ENCODE measurements at regions of chr21 and their contacts with region 1.

Region 1: DNA sequence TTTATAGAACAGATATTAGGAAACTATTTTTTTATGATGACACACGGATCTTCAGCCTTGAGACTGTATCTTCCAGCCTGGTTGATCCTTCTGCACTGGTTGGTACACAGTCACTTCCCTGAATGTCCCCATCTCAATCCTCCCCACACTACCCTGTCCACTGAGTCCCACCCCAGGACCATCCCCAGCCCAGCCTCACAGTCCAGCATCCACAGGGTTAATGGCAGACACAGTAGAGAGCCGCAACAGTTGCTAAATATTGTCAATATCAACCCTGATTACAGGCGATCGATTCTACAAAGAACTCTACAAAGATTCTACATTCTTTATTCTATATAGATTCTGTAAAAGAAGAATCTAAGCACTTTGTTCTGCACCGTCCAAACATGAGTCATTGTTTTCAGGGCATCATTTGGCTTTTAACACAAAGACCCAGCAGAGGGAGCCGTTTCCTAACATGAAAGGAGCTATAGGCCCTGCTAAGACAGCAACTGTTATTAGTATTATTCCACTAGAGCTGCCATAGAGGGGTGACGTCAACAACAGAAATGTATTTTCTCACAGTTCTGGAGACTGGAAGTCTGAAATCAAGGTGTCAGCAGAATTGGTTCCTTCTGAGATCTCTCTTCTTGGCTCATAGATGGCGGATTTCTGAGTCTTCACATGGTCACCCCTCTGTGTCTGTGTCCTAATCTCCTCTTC is 30.1 kb upstream of the IFNAR2 start:
- DNase-seq: peak in 41 of 42 donors; percentile 42 to 95 (median 83)

Region 2: GRCh38 chr21:32994305-32994704 is 205.4 kb before region 1 on chr21:
- intact Hi-C with region 1: loop called (anchors 5 kb)
- DNase-seq: peak in 4 of 42 donors; percentile 42 to 58 (median 52)

Region 3: DNA sequence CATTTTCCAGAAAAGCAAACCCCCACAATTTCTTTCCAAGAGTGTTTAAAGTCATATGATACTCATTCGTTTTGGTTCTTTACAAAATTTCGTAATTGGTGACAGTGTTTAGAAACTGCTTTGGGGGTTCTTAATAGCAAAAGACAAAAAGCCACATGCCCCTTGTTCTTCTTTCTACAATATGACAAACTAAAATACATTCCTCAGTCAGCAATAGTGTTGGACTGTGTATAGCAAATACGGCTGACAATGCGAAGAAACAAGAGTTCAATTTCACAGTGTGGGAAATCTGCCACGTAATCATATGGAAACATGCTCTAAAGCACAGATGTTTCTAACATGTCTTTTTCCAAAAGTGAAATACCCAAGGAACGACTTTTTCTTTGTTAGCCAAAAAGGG is 117.5 kb after region 1 on chr21:
- intact Hi-C with region 1: no loop called
- DNase-seq: no peak

Region 4: GRCh38 chr21:33360881-33361602 is 161.4 kb after region 1 on chr21:
- intact Hi-C with region 1: loop called (anchors 5 kb)
- DNase-seq: peak; percentile 66 to 93 (median 84)

Region 5: GRCh38 chr21:33441489-33442477 is 242.1 kb after region 1 on chr21:
- intact Hi-C with region 1: loop called (anchors 5 kb)
- DNase-seq: peak in 13 of 42 donors; percentile 13 to 55 (median 27)

Region 6: DNA sequence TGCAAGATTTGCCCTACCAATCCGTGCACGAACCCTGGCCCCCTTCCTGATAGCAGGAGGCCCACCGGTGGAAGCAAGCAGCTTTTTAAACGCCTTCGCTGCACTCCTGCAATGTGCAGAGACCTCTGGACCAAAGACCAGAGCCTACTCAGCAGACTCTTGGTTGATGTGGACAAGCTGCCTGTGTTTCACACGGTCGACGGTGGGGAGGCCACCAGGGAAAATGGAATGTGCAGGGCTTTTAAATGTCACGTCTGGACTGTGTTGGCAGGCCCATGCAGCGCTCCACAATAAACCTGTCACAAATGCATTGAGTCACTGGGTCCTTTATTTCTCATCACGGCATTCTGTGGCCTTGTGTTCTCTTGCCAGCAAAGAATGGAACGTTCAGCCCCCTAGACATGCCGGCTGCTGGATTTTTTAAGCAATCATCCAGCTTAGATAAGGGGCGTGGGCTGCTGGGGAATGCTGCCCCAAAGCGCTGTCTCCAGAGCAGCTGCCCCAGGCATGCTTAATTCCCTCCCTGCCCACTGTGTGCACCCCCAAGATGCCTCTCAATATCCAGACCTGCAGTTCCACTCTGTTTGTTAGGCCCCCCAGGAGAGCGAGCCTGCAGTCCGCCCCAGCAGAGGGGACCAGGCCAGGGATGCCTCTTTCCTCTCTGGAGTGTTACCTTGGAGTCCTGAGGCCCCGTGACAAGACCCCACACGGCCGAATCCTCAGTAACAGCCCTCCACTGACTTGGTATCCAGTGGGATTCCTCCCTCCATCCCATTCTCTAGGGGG is 644.6 kb after region 1 on chr21:
- intact Hi-C with region 1: no loop called
- DNase-seq: peak in 3 of 42 donors; percentile 9 to 57 (median 50)